OCI-LY7 (cell line): ENCODE measurements at regions of chr5 and their contacts with region 1.

Region 1: DNA sequence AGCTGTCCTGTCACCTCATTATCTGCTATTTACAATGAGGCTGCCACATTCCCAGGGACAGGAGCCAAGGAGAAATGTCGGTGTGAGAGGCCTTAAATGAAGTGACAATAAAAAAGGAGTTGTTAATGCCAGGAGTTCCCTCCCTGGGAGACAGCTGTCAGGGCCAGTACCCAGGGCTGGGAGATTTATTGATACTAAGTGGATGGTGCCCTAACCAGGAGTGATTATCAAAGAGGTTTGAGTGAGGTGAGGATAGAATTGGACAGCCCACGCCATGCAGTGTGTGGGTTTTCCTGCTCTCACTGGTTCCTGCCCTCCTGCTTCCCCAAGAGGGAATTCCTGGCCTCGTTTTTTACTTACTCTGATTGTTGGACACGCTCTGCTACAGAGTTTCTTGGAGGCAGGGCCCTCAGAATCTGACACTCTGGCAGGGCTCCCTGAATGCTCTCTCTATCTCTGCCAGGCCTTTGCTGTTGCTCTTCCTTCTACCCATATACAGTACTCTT is 150.8 kb downstream of the GRIA1 start:
- DNase-seq: no peak
- H3K4me3 ChIP-seq: no peak overlapping the region
- H3K27ac ChIP-seq: no peak overlapping the region
- H3K4me1 ChIP-seq: no peaks in the 10 kb centered on the region
- CTCF ChIP-seq: no peak

Region 2: GRCh38 chr5:153654504-153655200 is 13.4 kb after region 1 on chr5:
- CTCF ChIA-PET with region 1: no interaction called
- POLR2A ChIA-PET with region 1: interaction called, 10 read pairs
- intact Hi-C with region 1: no loop called
- DNase-seq: no peak
- H3K4me3 ChIP-seq: no peak overlapping the region
- H3K27ac ChIP-seq: no peak overlapping the region
- H3K4me1 ChIP-seq: peaks cover 7% of the 10 kb centered on the region
- CTCF ChIP-seq: no peak

Region 3: GRCh38 chr5:153767221-153768188 is 126.3 kb after region 1 on chr5:
- CTCF ChIA-PET with region 1: no interaction called
- POLR2A ChIA-PET with region 1: no interaction called
- intact Hi-C with region 1: no loop called
- DNase-seq: no peak
- H3K4me3 ChIP-seq: no peak overlapping the region
- H3K27ac ChIP-seq: no peak overlapping the region
- H3K4me1 ChIP-seq: no peaks in the 10 kb centered on the region
- CTCF ChIP-seq: no peak